Activated naive CD4-positive, alpha-beta T cell treated with anti-CD3 and anti-CD28 coated beads for 36 hours (primary cell): ENCODE measurements at regions of chr2 and their contacts with region 1.

Region 1: GRCh38 chr2:70616168-70616694 is 62.6 kb upstream of the TGFA start:
- DNase-seq: no peak
- H3K4me3 Mint-ChIP-seq: no peak overlapping the region
- H3K27ac Mint-ChIP-seq: no peak overlapping the region
- H3K4me1 Mint-ChIP-seq: no peaks in the 10 kb centered on the region
- H3K27me3 Mint-ChIP-seq: no peaks in the 10 kb centered on the region

Region 2: DNA sequence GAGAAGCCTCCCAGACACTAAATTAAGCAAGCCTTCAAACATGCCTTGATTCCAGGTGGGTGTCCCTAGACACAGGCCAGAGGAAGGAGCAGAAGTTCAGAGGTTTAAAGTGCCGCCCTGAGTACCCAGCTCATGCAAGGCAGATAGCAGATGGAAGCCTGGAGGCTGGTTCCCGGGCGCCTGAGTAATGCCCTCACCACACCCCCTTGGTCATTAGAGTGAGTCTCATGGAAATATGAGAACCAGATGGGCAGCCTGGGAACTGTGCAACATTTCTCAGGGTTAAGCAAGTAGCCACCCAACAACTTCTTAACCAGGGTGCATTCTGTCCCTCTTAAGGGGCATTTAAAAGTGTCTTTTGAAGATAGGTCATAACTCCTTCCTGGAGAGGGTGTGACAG is 106.7 kb before region 1 on chr2:
- CTCF ChIA-PET with region 1: no interaction called
- intact Hi-C with region 1: no loop called
- DNase-seq: no peak
- H3K4me3 Mint-ChIP-seq: no peak overlapping the region
- H3K27ac Mint-ChIP-seq: no peak overlapping the region
- H3K4me1 Mint-ChIP-seq: no peaks in the 10 kb centered on the region
- H3K27me3 Mint-ChIP-seq: no peaks in the 10 kb centered on the region

Region 3: DNA sequence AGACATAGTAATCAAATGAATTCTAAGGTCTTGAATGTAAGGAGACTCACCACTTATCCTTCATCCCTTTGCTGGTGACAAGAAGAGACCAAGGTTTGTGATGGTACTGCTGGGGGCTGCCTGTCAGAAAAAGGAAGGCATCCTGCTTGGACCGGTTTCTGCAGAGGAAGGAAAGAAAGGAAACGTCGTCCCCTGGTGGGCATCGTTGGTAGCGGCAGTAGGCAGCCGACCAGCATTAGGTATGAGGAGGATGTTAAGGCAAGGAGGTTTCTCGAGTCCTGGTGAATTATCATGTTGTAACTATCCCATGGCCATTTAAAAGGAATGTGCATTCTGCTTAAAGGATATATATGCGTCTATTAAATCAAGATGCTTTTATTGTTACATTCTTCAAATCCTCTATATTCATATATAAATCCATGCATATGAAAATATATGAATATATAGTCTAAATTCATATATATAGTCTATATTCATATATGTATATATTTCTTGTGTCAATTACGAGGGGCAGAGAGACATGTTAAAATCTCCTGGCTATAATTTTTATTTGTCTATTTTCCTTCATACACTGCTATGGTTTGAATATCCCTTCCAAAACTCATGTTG is 31.7 kb after region 1 on chr2:
- CTCF ChIA-PET with region 1: interaction called, 23 read pairs
- intact Hi-C with region 1: no loop called
- DNase-seq: peak; percentile 88
- H3K4me3 Mint-ChIP-seq: no peak overlapping the region
- H3K27ac Mint-ChIP-seq: no peak overlapping the region
- H3K4me1 Mint-ChIP-seq: no peaks in the 10 kb centered on the region
- H3K27me3 Mint-ChIP-seq: no peaks in the 10 kb centered on the region